ENCODE measurements at regions of chr4 and their contacts with region 1.

Region 1: DNA sequence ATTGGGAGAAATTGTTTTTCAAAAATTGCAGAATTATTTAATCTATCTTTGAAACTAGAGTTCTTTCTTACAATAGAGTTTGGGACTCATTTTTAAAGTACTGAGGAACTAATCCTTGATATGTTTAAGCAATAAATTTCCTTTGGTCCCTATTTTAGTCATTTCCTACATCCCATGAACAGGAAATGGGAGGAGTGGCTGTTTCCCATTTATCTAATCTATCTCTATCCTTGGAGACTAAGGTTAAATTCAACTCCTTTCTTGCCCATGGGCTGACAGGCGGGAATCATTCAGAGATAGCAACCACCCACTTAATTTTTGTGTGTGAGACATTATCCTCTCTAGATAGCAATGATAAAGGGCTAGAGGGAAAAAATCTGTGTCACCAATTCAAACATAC is 131.6 kb upstream of the EMCN start:
- DNase-seq: no peak
- ATAC-seq: peak in 5 of 8 donors; percentile 44 to 83 (median 79)
- H3K4me3 ChIP-seq: no peak overlapping the region
- H3K27ac ChIP-seq: peak overlapping the region in 5 of 10 donors; percentile 5 to 51 (median 41)
- H3K4me1 ChIP-seq: peaks cover 0 to 26% (median 18%) of the 10 kb centered on the region in 9 donors
- H3K27me3 ChIP-seq: no peaks in the 10 kb centered on the region
- CTCF ChIP-seq: no peak

Region 2: DNA sequence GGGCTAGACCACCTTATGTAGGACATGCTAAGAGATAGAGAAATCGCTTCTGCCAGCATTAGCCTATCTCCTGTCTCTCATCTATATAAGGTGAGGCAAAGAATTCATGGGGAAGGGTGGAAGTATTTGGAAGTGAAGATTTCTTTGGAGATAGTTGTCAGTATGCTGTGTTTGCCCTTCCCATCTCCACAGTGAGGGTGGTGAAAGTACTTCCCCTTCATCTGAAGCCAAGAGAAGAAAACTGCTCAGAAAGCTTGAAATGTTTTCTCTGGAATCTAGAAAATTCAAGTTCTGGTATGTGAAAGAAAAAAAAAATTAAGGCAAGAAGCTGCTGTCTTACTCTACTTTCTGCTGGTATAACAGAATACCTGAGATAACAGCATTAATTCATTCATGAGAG is 1548.5 kb before region 1 on chr4:
- intact Hi-C with region 1: no loop called
- DNase-seq: no peak
- ATAC-seq: no peak
- H3K4me3 ChIP-seq: no peak overlapping the region
- H3K27ac ChIP-seq: no peak overlapping the region
- H3K4me1 ChIP-seq: peaks cover 0 to 14% (median 0%) of the 10 kb centered on the region in 9 donors
- H3K27me3 ChIP-seq: no peaks in the 10 kb centered on the region
- CTCF ChIP-seq: no peak

Region 3: DNA sequence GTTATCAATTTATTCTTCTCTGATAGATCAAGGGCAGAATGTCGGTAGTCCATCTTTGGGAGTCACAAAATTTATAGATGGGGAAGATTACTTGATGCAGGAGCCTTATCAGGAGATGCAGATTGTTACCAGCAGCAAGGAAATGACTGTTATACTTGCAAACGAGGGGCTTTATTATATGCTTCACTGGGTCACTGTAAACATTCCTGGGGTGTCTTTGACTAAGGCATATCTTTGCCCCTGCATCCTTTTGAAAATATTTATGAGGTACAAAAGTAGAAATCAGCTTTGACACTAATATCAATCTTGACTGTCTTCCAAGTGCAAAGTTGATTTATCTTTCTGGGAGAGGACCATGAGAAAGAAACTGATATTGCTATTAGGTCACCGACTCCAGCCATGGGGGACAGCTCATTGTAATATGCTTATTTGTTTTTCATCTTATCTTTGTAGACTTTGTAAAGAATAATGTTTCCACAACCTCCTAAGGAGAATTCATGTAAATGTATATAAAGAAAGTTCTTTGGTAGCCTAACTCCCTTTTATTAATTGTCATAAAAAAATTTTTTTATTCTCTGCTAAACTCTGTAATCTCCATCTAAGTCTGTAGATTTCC is 45.7 kb after region 1 on chr4:
- intact Hi-C with region 1: loop called in 1 of 10 experiments (anchors 1 kb)
- DNase-seq: no peak
- ATAC-seq: no peak
- H3K4me3 ChIP-seq: no peak overlapping the region
- H3K27ac ChIP-seq: no peak overlapping the region
- H3K4me1 ChIP-seq: peaks cover 0 to 13% (median 0%) of the 10 kb centered on the region in 9 donors
- H3K27me3 ChIP-seq: no peaks in the 10 kb centered on the region
- CTCF ChIP-seq: no peak